ENCODE measurements at regions of chr4 and their contacts with region 1.

Region 1: GRCh38 chr4:1011022-1011694 is at the start of gene FGFRL1:
- DNase-seq: peak; percentile 94 to 96 (median 95)
- H3K4me3 ChIP-seq: peak within 1 kb of the TSS; percentile 62
- H3K27ac ChIP-seq: peak within 1 kb of the TSS; percentile 34 to 66
- H3K4me1 ChIP-seq: peaks cover 14% of the 10 kb centered on the region
- H3K27me3 ChIP-seq: no peaks in the 10 kb centered on the region
- CTCF ChIP-seq: no peak
- EP300 ChIP-seq: no peak
- POLR2A ChIP-seq: no peak
- total RNA-seq, gene FGFRL1: 23.4 to 59.1 (median 40.2) TPM

Region 2: GRCh38 chr4:835148-836002 is 175.8 kb before region 1 on chr4:
- intact Hi-C with region 1: no loop called
- DNase-seq: no peak
- H3K4me3 ChIP-seq: no peak overlapping the region
- H3K27ac ChIP-seq: no peak overlapping the region
- H3K4me1 ChIP-seq: no peaks in the 10 kb centered on the region
- H3K27me3 ChIP-seq: no peaks in the 10 kb centered on the region
- CTCF ChIP-seq: no peak
- EP300 ChIP-seq: no peak
- POLR2A ChIP-seq: no peak

Region 3: DNA sequence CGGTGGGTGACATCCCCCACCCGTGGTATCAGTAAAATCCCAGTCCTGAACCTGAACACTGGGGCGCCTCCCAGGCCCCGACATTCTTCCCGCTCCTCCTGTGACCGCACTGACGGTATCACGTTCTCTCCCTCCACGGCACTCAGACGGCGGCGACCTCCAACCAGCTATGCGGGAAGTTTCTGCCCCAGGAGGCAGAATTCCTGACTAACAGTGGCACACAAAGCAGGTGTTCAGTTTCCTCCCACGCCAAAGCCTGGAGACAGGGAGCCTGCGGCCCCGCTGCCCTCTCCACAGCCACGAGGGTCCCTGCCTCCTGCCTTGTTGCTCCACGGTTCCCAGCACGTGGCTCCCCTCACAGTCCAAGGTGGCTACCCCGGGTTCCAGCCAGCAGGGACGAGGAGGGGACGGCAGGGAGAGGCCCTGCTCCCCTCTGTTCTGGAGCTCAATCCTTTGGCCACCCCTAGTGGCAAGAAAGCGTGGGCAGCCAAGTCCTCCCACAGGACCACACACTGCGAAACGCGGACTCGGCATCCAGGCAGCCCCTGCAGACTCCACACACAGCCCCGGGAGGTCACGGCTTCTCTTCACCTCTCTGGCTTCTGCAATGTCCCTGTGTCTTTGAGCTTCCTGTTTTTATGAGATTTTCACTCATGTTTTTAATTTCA is 222.6 kb after region 1 on chr4:
- intact Hi-C with region 1: loop called in 1 of 4 experiments (anchors 10 kb)
- DNase-seq: peak; percentile 60 to 80 (median 68)
- H3K4me3 ChIP-seq: no peak overlapping the region
- H3K27ac ChIP-seq: no peak overlapping the region
- H3K4me1 ChIP-seq: peaks cover 5% of the 10 kb centered on the region
- H3K27me3 ChIP-seq: no peaks in the 10 kb centered on the region
- CTCF ChIP-seq: peak in 2 of 3 donors; percentile 23 to 73
- EP300 ChIP-seq: no peak
- POLR2A ChIP-seq: no peak

Region 4: DNA sequence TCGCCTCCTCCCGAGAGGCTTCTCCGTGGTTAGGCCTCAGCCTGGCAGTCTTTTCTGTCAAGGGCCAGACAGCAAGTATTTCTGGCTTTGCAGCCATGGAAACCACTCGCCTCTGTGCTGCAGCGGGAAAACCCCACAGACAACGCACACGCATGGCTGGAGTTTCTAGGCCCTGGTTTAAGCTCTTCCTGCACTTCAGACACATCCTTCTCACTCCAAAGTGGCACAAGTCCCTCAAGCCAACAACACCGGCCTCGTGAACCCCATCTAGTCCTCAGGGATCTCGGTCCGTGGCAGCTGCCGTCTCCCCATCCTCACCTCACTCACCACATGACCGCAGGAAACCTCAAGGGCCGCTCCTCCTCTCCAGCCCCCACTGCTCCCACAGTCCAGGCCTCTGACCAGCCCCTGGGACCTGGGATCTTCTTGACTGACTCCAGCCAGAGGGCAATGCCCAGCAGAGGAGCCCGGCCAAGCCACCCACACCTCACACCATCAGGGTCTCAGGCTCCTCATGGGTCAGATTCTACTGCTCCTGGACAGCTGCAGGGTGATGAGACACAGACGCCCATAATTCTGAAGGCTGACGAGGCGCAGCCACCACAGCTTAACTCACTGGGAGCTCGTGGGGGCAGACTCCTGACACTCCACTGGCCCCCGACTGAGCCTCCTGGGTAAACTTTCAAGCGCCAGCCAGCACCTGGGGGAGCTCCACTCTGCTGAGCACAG is 823.1 kb after region 1 on chr4:
- intact Hi-C with region 1: no loop called
- DNase-seq: no peak
- H3K4me3 ChIP-seq: no peak overlapping the region
- H3K27ac ChIP-seq: no peak overlapping the region
- H3K4me1 ChIP-seq: no peaks in the 10 kb centered on the region
- H3K27me3 ChIP-seq: no peaks in the 10 kb centered on the region
- CTCF ChIP-seq: no peak
- EP300 ChIP-seq: no peak
- POLR2A ChIP-seq: no peak

Measured in ovary (tissue), 10 donors.